Activated naive CD4-positive, alpha-beta T cell treated with anti-CD3 and anti-CD28 coated beads for 36 hours (primary cell): ENCODE measurements at regions of chr13 and their contacts with region 1.

Region 1: DNA sequence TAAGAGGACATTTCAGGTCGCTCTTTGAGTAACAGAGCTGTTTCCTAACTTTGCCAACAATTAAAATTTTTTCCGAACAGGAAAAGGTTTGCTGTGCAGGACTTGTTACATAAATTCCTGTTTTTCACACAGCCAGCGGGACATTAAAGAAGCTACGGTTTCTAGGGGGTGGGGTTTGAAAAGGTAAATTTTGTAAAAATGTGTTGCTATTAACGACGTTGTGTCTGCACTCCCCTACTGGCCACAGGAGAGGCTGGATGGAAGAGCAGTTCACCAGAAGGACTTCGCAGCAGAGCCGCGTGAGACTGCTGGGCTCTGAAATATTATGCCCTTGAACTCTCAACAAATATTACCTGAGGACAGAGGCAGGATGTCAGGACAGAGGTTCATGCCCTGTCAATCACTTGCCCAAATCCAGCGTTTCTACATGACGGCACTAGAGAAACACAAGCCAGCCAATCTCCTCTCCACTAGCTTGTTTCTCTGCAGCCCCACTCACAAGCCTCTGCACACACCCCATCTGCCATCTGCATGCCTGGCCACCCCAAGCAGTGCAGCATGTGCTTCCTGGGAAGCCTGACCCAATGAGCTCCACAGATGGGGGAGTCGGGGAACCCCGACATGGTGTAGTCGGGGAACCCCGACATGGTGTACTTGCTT is 102.0 kb downstream of the FOXO1 start:
- DNase-seq: peak; percentile 44
- H3K4me3 Mint-ChIP-seq: peak overlapping the region; percentile 30
- H3K27ac Mint-ChIP-seq: peak overlapping the region; percentile 82
- H3K4me1 Mint-ChIP-seq: peaks cover 84% of the 10 kb centered on the region
- H3K27me3 Mint-ChIP-seq: no peaks in the 10 kb centered on the region

Region 2: GRCh38 chr13:40485611-40486517 is 78.6 kb before region 1 on chr13:
- CTCF ChIA-PET with region 1: no interaction called
- intact Hi-C with region 1: no loop called
- DNase-seq: peak; percentile 86
- H3K4me3 Mint-ChIP-seq: peak overlapping the region; percentile 8
- H3K27ac Mint-ChIP-seq: peak overlapping the region; percentile 83
- H3K4me1 Mint-ChIP-seq: peaks cover 82% of the 10 kb centered on the region
- H3K27me3 Mint-ChIP-seq: no peaks in the 10 kb centered on the region

Region 3: DNA sequence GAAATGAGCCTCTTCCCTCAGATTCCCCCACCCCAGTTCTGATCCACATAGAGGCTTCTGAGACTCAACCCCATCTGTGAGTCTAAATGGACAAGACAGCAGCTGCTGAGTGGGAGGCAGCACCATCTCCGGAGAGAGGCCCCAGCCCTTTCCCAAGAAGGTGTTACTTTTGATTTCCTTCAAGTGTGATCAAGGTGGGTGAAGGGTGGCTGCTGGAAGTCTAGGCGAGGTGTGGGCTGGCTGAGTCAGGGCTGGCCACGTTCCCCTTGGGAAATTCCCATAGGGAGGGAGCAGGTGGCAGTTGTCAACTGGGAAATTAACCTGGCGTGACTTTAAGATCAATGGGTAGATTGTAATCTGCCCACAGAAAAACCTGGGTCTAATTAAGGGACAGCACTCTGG is 46.0 kb before region 1 on chr13:
- CTCF ChIA-PET with region 1: no interaction called
- intact Hi-C with region 1: no loop called
- DNase-seq: peak; percentile 92
- H3K4me3 Mint-ChIP-seq: peak overlapping the region; percentile 23
- H3K27ac Mint-ChIP-seq: peak overlapping the region; percentile 87
- H3K4me1 Mint-ChIP-seq: peaks cover 72% of the 10 kb centered on the region
- H3K27me3 Mint-ChIP-seq: no peaks in the 10 kb centered on the region

Region 4: DNA sequence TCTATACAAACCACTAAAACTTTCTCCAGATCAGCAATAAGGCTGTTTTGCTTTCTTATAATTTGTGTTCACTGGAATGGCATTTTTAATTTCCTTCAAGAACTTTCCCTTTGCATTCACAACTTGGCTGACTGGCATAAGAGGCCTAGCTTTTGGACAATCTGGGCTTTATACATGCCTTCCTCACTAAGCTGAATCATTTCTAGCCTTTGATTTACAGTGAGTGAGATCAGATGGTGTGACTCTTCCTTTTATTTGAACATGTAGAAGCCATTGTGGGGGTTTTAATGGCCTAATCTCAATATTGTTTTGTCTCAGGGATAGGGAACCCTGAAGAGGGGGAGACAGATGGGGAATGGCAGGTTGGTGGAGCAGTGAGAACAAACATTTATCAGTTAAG is 19.3 kb after region 1 on chr13:
- CTCF ChIA-PET with region 1: no interaction called
- intact Hi-C with region 1: loop called (anchors 2 kb)
- DNase-seq: no peak
- H3K4me3 Mint-ChIP-seq: no peak overlapping the region
- H3K27ac Mint-ChIP-seq: peak overlapping the region; percentile 46
- H3K4me1 Mint-ChIP-seq: peaks cover 92% of the 10 kb centered on the region
- H3K27me3 Mint-ChIP-seq: no peaks in the 10 kb centered on the region